Activated T-helper 2 cell treated with anti-CD3 and anti-CD28 coated beads, Interferon-gamma antibody, Interleukin-2, Interleukin-4, amounts not matched to agents 10 μg/mL and 5 μg/mL and 100 μg/mL, durations not matched to agents 14 hours and 24 hours and 36 hours (primary cell): ENCODE measurements at regions of chr10 and their contacts with region 1.

Region 1: DNA sequence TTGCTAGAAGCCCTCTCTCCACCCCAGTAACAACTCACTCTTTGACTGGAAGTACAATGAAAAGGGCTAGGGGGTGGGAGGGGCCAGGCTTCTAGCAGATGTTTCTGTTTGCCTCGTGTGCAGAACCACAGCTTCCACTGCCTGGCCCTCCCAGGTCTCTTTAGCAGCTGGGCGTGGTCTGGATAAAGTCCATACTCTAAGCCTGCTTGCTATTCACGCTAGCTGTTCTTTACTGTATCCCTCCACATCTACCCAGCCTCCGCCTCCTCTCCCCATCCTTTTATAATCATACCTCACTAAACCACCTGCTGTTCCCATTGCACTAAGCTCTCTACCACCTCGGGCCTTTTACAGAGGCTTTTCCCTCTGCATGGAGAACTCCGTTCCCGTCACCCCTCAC is 288.8 kb downstream of the CAMK1D start:
- DNase-seq: peak; percentile 28
- H3K4me3 Mint-ChIP-seq: no peak overlapping the region
- H3K27ac Mint-ChIP-seq: peak overlapping the region; percentile 29
- H3K4me1 Mint-ChIP-seq: peaks cover 45% of the 10 kb centered on the region
- H3K27me3 Mint-ChIP-seq: no peaks in the 10 kb centered on the region

Region 2: GRCh38 chr10:12594448-12594944 is 43.6 kb before region 1 on chr10:
- intact Hi-C with region 1: loop called (anchors 5 kb)
- DNase-seq: peak; percentile 20
- H3K4me3 Mint-ChIP-seq: no peak overlapping the region
- H3K27ac Mint-ChIP-seq: peak overlapping the region; percentile 81
- H3K4me1 Mint-ChIP-seq: peaks cover 56% of the 10 kb centered on the region
- H3K27me3 Mint-ChIP-seq: no peaks in the 10 kb centered on the region